ENCODE measurements at regions of chrX and their contacts with region 1.

Region 1: DNA sequence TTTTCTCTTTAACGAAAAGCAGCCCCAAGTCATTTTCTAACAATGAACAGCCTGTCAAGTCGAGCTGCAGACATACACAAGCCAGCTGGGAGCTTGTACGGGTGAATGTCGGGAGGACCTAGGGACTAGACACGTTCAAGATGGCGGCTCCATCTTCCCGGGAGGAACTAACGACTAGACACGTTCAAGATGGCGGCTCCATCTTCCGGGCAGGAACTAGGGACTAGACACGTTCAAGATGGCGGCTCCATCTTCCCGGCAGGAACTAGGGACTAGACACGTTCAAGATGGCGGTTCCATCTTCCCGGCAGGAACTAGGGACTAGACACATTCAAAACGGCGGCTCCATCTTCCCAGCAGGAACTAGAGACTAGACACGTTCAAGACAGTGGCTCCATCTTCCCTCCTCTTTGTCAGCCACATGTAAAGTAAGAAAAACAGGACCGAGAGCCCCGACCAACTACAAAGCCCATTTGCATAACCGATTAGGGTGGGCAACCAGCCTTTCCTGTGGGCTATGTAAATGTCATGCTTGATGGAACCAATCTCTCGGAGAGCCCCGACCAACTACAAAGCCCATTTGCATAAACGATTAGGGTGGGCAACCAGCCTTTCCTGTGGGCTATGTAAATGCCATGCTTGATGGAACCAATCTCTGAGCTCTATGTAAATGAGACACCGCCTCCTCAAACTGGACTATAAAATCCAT is 175.5 kb downstream of the DHRSX start:
- DNase-seq: peak; percentile 48 to 96 (median 82)

Region 2: DNA sequence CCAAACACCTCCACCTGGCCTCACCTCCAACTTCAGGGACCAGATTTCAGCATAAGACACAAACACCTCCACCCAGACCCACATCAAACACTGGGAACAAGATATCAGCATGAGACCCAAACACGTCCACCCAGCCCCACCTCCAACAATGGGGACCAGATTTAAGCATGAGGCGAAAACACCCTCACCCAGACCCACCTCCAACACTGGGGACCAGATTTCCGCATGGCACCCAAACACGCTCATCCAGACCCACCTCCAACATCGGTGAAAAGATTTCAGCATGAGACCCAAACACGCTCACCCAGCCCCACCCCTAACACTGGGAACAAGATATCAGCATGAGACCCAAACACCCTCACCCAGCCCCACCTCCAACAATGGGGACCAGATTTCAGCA is 500.4 kb before region 1 on chrX:
- intact Hi-C with region 1: no loop called
- DNase-seq: peak in 1 of 10 donors; percentile 63

Region 3: DNA sequence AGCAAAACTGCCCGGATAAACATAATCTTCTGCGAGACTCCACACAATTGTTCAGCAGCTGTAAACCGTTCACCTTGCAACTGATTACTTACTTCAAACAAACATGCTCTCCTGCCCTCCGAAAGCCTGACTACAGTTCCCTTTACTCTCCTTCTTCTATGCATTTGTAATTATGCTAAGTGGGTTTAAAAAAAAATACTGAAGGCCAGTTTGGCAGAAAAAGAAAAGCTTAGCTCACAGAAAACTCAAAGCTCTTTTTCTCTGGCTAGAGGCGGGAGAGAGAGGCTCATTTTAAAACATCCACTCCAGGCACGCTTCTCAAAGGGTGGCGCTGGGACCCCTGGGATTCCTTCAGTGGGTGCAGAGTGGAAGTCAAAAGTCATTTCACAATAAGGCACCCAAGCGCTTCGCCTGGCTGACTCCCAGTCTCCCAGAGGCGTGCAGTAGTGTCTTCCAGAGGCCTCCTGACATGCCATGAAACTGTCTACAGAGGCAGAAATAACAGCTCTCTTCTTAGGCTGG is 173.6 kb after region 1 on chrX:
- intact Hi-C with region 1: loop called (anchors 5 kb)
- DNase-seq: peak in 1 of 10 donors; percentile 62

Region 4: GRCh38 chrX:3811331-3812311 is 1486.4 kb after region 1 on chrX:
- intact Hi-C with region 1: loop called (anchors 10 kb)
- DNase-seq: peak in 5 of 10 donors; percentile 10 to 77 (median 26)